ENCODE measurements at regions of chr19 and their contacts with region 1.

Region 1: DNA sequence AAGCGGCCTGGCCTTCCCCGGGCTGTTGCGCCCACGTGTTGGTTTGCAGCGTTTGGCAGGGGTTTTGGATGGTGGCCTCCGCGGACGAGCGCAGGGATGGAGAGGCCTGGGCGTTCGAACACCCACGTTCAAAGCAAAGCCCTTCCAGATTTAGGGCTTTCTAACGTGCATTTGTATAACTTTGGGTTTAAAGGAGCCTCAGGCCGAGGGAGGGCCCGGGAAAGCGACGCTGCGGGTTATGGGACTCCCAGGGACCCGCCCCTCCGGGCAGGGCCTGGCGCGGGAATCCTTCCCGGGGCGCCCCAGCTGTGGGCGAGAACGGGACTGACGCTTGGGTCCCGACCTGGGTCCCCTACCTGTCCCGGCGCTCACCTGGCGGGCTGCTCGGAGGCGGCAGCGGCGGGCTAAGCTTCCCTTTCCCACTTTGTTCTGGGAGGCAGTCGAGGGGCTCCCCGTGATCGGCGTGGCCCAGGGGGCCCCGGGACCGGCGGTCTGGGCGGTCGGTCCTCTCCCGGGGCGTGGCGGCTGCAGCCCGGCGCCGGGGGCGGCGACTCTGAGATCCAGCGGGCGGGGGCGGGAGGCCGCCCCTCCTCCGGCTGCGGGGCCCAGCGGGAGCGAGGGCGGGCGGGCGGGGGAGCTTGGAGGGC is at the start of gene FBXO17:
- DNase-seq: peak in 1 of 2 experiments; percentile 84
- H3K4me3 ChIP-seq: peak within 1 kb of the TSS; percentile 48 to 82 (median 74)
- H3K27ac ChIP-seq: peak within 1 kb of the TSS; percentile 12; the same call in 1 of the 2 replicates
- H3K4me1 ChIP-seq: peaks cover 0 to 7% (median 3%) of the 10 kb centered on the region in 4 experiments; a peak in 3 of 7 replicates
- H3K27me3 ChIP-seq: 0 out of 7 replicates have a peak, but pooled peaks cover 0 to 3% (median 0%) of the 10 kb centered on the region in 4 experiments
- CTCF ChIP-seq: no peak
- EP300 ChIP-seq: no peak
- POLR2A ChIP-seq: no peak; a peak in 1 of 3 replicates
- RAD21 ChIP-seq: no peak
- total RNA-seq, gene FBXO17: 14.5 and 15.3 TPM in 2 replicates

Region 2: DNA sequence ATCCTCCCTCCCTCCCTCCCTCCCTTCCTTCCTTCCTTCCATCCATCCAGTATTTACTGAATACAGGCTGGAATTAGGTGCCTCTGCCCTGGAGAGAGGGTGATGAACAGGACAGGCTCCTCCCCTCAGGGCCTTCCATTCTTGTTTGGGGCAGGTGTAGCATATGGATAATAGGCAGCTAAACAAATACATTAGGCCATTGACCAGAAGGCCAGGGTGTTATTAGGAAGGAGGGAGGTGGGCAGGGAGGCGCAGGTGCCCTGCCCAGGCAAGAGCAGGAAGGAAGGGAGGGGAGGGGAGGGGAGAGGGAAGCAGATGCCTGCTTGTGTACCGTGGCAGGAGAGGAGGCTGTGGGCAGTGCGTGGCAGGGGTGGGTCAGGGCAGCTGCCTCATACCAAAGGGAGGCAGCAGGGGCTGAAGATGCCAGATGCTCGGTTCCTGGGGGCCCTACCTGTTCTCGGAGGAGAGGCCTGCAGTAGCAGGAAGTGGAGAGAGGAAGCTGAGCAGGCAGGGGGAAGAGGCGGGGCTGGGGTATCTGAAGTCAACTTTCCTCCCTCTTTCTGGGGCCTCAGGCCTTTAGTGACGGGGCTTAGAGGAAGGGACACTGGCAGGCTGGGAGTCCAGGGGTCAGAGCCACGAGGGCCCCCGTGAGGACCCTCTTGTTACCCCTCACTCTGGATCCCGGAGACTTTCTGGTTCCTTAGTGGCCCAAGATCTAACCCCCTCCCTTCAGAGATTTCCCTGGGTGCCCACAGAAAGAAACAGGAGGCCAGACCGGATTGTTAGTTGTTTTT is 97.4 kb before region 1 on chr19 and contains the start of gene RINL:
- CTCF ChIA-PET with region 1: no interaction called
- POLR2A ChIA-PET with region 1: no interaction called
- DNase-seq: no peak
- H3K4me3 ChIP-seq: no peak within 1 kb of the TSS
- H3K27ac ChIP-seq: no peak within 1 kb of the TSS
- H3K4me1 ChIP-seq: peaks cover 0 to 8% (median 3%) of the 10 kb centered on the region in 4 experiments; a peak in 6 of 7 replicates
- H3K27me3 ChIP-seq: no peaks in the 10 kb centered on the region
- CTCF ChIP-seq: no peak
- EP300 ChIP-seq: no peak
- POLR2A ChIP-seq: no peak
- RAD21 ChIP-seq: no peak
- total RNA-seq, gene RINL: 11.9 and 14.2 TPM in 2 replicates

Region 3: GRCh38 chr19:38949580-38950367 is 25.6 kb before region 1 on chr19:
- CTCF ChIA-PET with region 1: interaction called, 14 read pairs
- POLR2A ChIA-PET with region 1: interaction called, 3 read pairs
- DNase-seq: peak; percentile 87 to 99
- H3K4me3 ChIP-seq: peak overlapping the region; percentile 36 to 61 (median 54)
- H3K27ac ChIP-seq: no peak overlapping the region; the same call in 1 of the 2 replicates
- H3K4me1 ChIP-seq: peaks cover 0 to 5% (median 0%) of the 10 kb centered on the region in 4 experiments; a peak in 3 of 7 replicates
- H3K27me3 ChIP-seq: peaks cover 0 to 3% (median under 1%) of the 10 kb centered on the region in 4 experiments; a peak in 1 of 7 replicates
- CTCF ChIP-seq: no peak
- EP300 ChIP-seq: no peak
- POLR2A ChIP-seq: no peak
- RAD21 ChIP-seq: no peak

Region 4: GRCh38 chr19:38959618-38960017 is 15.7 kb before region 1 on chr19:
- CTCF ChIA-PET with region 1: interaction called, 16 read pairs
- POLR2A ChIA-PET with region 1: interaction called, 7 read pairs
- DNase-seq: no peak
- H3K4me3 ChIP-seq: no peak overlapping the region
- H3K27ac ChIP-seq: no peak overlapping the region
- H3K4me1 ChIP-seq: peaks cover 0 to 3% (median under 1%) of the 10 kb centered on the region in 4 experiments; a peak in 2 of 7 replicates
- H3K27me3 ChIP-seq: no peaks in the 10 kb centered on the region
- CTCF ChIP-seq: no peak
- EP300 ChIP-seq: no peak
- POLR2A ChIP-seq: no peak
- RAD21 ChIP-seq: no peak

Region 5: GRCh38 chr19:38964738-38965137 is 10.6 kb before region 1 on chr19:
- CTCF ChIA-PET with region 1: interaction called, 16 read pairs
- POLR2A ChIA-PET with region 1: interaction called, 7 read pairs
- DNase-seq: no peak
- H3K4me3 ChIP-seq: no peak overlapping the region
- H3K27ac ChIP-seq: no peak overlapping the region
- H3K4me1 ChIP-seq: peaks cover 0 to 3% (median under 1%) of the 10 kb centered on the region in 4 experiments; a peak in 2 of 7 replicates
- H3K27me3 ChIP-seq: no peaks in the 10 kb centered on the region
- CTCF ChIP-seq: no peak
- EP300 ChIP-seq: no peak
- POLR2A ChIP-seq: no peak
- RAD21 ChIP-seq: no peak

Region 6: GRCh38 chr19:38989066-38989605 is 13.8 kb after region 1 on chr19:
- CTCF ChIA-PET with region 1: interaction called, 32 read pairs
- POLR2A ChIA-PET with region 1: interaction called, 11 read pairs
- DNase-seq: peak in 1 of 2 experiments; percentile 69
- H3K4me3 ChIP-seq: peak overlapping the region in 1 of 4 experiments; percentile 12; a peak in 2 of 8 replicates
- H3K27ac ChIP-seq: no peak overlapping the region
- H3K4me1 ChIP-seq: peaks cover 0 to 5% (median 2%) of the 10 kb centered on the region in 4 experiments; a peak in 4 of 7 replicates
- H3K27me3 ChIP-seq: no peaks in the 10 kb centered on the region; a peak in 1 of 7 replicates
- CTCF ChIP-seq: no peak
- EP300 ChIP-seq: no peak
- POLR2A ChIP-seq: no peak
- RAD21 ChIP-seq: no peak

Region 7: DNA sequence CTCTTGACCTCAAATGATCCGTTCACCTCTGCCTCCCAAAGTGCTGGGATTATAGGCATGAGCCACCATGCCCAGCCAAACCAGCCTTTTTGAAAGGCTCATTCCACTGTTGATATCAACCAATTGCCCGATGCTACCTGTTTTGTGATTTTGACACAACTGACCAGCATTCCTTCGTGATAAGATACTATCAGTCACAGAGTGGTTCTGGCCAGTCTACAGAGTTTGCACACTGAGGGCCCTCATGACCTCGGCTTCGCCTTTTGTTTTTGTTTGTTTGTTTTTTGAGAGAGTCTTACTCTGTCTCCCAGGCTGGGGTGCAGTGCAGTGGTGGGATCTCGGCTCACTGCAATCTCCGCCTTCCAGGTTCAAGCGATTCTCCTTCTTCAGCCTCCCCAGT is 19.3 kb after region 1 on chr19:
- CTCF ChIA-PET with region 1: interaction called, 32 read pairs
- POLR2A ChIA-PET with region 1: interaction called, 11 read pairs
- DNase-seq: no peak
- H3K4me3 ChIP-seq: no peak overlapping the region
- H3K27ac ChIP-seq: no peak overlapping the region
- H3K4me1 ChIP-seq: no peaks in the 10 kb centered on the region
- H3K27me3 ChIP-seq: no peaks in the 10 kb centered on the region; a peak in 1 of 7 replicates
- CTCF ChIP-seq: no peak
- EP300 ChIP-seq: no peak
- POLR2A ChIP-seq: no peak
- RAD21 ChIP-seq: no peak

Measured in H1 (cell line).